ENCODE measurements at regions of chr20 and their contacts with region 1.

Region 1: DNA sequence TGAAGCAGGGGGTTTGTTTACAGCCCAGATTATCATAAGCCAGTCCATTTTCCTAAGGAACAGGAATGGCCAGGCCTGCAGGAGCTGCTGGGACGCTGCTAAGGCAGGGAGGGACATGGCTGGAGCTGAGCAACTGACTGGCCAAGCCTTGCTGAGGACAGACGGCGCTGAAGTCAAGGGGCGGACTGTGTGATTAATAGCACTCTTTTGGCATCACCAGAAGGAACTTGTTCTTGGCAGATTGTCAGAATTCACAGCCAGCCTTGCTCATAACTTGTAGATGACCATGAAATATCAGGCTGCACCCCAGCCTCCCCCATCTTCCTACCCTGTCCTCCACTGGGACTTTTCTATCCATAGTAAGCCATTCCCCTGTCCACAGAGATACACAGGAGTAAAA is 218.8 kb upstream of the RNF24 start:
- DNase-seq: no peak

Region 2: GRCh38 chr20:4585104-4585753 is 351.1 kb after region 1 on chr20:
- in situ Hi-C with region 1: loop called (anchors 10 kb)
- DNase-seq: no peak